Breast epithelium (tissue), 4 donors: ENCODE measurements at regions of chr19 and their contacts with region 1.

Region 1: DNA sequence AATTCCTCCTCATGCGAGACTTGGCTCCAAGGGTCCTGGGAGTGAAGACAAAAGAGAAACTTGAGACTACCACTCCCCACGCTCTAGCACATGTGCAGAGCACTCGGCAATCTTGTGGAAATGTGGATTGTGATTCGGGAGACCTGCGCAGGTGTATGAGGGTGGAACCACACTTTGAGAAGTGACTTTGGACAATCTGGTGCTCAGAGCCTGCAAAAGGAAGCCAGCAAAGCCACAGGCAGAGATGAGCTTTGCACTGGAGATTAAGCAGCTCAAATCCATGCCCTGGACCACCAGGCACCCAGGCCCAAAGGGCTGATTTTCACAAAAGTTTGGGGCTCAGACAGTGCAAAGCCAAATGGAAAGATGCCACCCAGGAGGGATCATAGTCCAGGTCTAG is 162.5 kb upstream of the TSHZ3 start:
- DNase-seq: no peak
- H3K4me3 ChIP-seq: no peak overlapping the region
- H3K27ac ChIP-seq: no peak overlapping the region
- H3K4me1 ChIP-seq: no peaks in the 10 kb centered on the region
- H3K27me3 ChIP-seq: peaks cover 0 to 25% of the 10 kb centered on the region in 2 donors
- CTCF ChIP-seq: no peak
- POLR2A ChIP-seq: no peak

Region 2: GRCh38 chr19:31535691-31536460 is 24.2 kb after region 1 on chr19:
- intact Hi-C with region 1: loop called (anchors 2 kb)
- DNase-seq: no peak
- H3K4me3 ChIP-seq: no peak overlapping the region
- H3K27ac ChIP-seq: no peak overlapping the region
- H3K4me1 ChIP-seq: no peaks in the 10 kb centered on the region
- H3K27me3 ChIP-seq: peaks cover 0 to 15% of the 10 kb centered on the region in 2 donors
- CTCF ChIP-seq: no peak
- POLR2A ChIP-seq: no peak

Region 3: DNA sequence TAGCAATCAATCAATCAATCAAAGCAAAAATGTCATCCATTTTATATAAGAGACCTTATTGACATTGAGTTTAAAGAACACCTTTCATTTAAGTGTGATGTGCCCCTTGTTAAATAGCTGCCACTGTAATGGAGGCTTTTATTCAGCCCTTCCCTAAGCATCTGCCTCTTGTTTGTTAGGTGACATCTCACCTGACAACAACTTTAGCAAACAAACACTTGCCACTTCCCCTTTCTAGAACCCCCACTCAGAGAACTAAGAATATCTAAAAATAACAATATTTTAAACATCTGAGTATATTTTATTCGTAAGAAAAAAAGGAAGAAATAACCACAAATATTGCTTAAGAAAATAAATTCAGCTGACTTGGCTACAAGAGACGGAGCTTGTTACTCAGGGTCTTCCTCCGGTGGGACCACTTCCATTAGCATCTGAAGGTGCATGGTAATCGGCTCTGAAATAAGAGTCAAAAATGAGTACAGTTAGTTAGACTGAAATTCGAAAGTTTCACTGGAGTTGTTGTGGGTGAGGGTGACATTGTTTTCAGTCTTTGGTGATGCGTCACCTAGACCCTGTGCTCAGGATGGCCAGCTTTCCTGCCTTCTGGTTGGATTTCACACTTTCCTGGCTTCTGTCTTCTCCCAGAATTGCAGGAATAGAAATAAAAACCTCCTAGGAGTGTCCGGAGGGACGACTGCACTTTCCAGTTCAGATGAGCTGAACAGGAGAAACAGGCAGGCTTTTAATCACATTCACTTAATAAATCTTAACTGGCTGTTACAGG is 1318.7 kb after region 1 on chr19:
- intact Hi-C with region 1: no loop called
- DNase-seq: no peak
- H3K4me3 ChIP-seq: no peak overlapping the region
- H3K27ac ChIP-seq: no peak overlapping the region
- H3K4me1 ChIP-seq: no peaks in the 10 kb centered on the region
- H3K27me3 ChIP-seq: no peaks in the 10 kb centered on the region
- CTCF ChIP-seq: no peak
- POLR2A ChIP-seq: no peak